ENCODE measurements at regions of chr18 and their contacts with region 1.

Region 1: DNA sequence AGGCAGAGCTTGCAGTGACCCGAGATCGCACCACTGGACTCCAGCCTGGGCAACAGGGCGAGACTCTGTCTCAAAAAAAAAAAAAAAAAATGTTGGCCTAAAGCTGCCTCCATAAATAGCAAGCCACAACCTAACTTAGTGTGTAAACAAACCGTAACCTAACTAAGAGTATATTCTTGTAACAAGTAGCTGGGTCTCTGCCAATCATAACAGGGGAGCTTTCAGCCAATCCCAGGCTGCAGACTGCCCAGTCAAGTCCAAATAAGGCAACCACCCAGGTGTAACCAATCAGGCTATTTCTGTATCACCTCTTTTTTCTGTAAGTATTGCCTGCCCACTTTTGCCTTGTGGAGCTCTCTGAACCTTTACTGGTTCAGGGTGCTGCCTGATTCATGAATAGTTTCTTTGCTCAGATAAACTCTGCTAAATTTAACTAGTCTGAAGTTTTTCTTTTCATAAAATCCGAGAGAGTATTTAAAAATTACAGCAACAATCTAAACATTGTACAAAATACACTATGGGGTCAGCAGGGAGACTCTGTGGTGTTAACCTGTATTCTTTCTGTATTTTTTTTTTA is 4.5 kb downstream of the PSTPIP2 start:
- DNase-seq: no peak

Region 2: GRCh38 chr18:45993389-45993788 is 74.1 kb before region 1 on chr18:
- intact Hi-C with region 1: loop called in 1 of 2 experiments (anchors 10 kb)
- DNase-seq: no peak

Measured in posterior vena cava (tissue), 2 donors.